Ascending aorta (tissue), 2 donors: ENCODE measurements at regions of chr15 and their contacts with region 1.

Region 1: GRCh38 chr15:34055853-34056595 is 17.0 kb upstream of the AVEN start:
- DNase-seq: no peak
- H3K4me3 ChIP-seq: peak overlapping the region in 1 of 2 donors; percentile 4
- H3K27ac ChIP-seq: peak overlapping the region; percentile 72 to 83
- H3K4me1 ChIP-seq: peaks cover 4 to 11% of the 10 kb centered on the region in 2 donors
- H3K27me3 ChIP-seq: no peaks in the 10 kb centered on the region
- CTCF ChIP-seq: no peak

Region 2: GRCh38 chr15:34038023-34038870 is 17.8 kb before region 1 on chr15:
- intact Hi-C with region 1: loop called (anchors 1 kb)
- DNase-seq: peak in 1 of 2 donors; percentile 86
- H3K4me3 ChIP-seq: peak overlapping the region; percentile 65 to 84
- H3K27ac ChIP-seq: peak overlapping the region; percentile 89 to 93
- H3K4me1 ChIP-seq: peaks cover 5% of the 10 kb centered on the region in 2 donors
- H3K27me3 ChIP-seq: no peaks in the 10 kb centered on the region
- CTCF ChIP-seq: no peak

Region 3: DNA sequence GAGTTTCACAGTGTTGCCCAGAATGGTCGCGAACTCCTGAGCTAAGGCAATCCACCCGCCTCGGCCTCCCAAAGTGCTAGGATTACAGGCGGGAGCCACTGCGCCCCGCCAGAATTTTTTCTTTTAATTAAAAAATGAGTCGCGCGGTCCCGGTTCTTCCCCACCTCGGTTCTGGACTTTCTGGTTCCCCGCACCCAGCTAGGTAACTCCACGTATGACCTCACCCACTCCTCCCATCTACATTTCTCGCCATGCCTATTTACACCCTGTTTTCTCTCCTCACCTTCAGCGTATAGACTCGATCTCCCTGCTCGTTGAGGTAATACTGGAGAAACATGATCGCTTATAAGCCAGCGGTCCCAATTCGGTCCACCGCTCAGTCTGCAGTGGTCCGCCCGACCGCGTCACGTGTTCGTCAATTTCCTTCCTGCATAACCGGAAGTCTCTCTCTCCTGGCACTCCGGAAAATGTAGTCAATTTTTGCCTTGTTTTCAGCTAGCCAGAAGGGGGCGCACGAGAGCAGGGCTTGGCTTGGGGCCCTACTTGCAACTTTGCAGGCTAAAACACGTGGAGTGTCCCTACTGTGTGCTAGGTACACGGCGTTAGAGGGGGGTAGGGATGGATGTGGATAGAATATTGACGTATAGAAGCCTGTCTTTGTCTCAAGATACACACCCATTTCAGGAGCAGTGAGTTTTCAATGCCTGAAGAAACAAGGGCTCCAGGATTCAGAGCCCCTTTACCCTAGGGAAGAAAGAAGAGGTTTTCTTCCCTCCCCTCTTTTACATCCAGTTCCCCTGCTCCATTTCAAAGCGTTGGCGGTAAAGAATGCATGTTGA is 286.9 kb after region 1 on chr15 and contains the starts of genes NOP10 and NUTM1:
- intact Hi-C with region 1: loop called (anchors 10 kb)
- DNase-seq: peak; percentile 63 to 95
- H3K4me3 ChIP-seq: peak within 1 kb of the TSS; percentile 67 to 77
- H3K27ac ChIP-seq: peak within 1 kb of the TSS; percentile 71 to 87
- H3K4me1 ChIP-seq: peaks cover 7 to 13% of the 10 kb centered on the region in 2 donors
- H3K27me3 ChIP-seq: no peaks in the 10 kb centered on the region
- CTCF ChIP-seq: peak; percentile 93 to 96 (median 95)
- total RNA-seq, gene NOP10: 212 TPM
- total RNA-seq, gene NUTM1: not detected

Region 4: DNA sequence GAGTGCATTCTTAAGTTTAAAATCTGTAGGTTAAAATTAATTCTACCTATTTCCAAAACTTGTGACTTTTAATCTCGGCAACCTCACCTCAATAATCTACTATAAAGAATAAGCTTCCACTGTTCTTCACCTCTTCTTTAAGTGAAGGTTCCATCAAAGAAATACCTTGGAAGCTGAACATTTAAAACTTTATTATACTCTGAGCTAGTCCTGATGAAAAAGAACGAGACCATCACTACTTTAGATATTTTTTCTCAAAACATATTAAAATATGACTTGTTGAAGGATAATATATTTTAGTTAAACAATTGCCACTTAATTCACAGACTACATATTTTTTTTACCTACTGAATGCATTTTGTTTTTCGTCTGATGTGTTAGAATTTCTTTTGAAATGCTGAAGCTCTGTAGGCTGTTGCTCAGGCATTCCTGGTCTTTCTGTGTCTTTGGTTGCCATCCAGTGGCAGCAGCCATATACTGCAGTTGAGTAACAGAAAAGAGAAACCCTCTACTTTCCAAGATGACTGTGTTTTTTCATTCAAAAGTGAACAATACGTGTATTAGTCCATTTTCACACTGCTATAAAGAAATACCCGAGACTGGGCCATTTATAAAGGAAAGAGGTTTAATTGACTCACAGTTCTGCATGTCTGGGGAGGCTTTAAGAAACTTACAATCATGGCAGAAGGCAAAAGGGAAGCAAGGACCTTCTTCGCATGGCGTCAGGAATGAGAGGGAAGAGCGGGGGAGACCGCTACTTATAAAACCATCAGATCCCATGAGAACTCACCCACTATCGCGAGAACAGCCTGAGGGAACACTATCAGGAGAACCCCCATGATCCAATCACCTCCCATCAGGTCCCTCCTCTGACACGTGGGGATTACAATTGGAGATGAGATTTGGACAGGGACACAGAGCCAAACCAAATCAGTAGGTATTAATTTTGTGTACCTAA is 532.0 kb after region 1 on chr15:
- intact Hi-C with region 1: loop called (anchors 5 kb)
- DNase-seq: peak in 1 of 2 donors; percentile 85
- H3K4me3 ChIP-seq: peak overlapping the region; percentile 28 to 51
- H3K27ac ChIP-seq: peak overlapping the region; percentile 3 to 50
- H3K4me1 ChIP-seq: peaks cover 5 to 7% of the 10 kb centered on the region in 2 donors
- H3K27me3 ChIP-seq: no peaks in the 10 kb centered on the region
- CTCF ChIP-seq: peak; percentile 74 to 84 (median 75)